Mammary epithelial cell (primary cell): ENCODE measurements at regions of chr18 and their contacts with region 1.

Region 1: DNA sequence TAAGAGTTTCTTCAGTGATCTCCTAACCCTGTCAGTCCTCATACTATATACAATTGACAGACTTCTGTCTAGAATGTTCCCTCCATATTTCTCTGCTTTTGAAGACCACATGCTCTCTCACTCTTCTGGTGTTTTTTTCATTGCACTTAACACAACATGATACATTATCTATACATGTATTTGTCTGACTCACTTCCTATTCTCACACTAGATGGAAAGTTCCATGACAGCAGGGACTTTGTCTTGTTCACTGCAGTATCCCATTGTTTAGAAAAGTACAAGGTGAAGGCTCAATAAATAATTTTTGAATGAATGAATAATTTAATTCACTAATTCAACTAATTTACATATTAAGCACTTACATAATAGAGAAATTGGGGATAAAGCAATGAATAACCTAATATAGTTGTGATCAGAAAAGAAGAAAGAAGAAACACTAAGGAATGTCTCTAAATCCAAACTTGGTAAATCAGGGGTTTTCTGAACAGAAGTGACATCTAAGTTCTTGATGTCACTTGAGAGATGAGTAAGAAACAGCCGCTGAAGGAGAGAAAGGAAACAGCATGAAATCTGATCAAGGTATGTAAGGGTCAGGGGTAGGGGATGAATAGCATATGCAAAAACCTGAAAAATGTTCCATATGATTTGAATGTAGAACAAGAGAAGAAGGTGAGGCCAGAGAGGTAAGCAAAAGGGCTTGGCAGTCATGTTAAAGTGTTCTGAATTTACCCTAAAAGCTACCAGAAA is 42.4 kb downstream of the MBD2 start:
- DNase-seq: peak; percentile 46
- H3K4me3 ChIP-seq: no peak overlapping the region
- H3K27ac ChIP-seq: no peak overlapping the region
- H3K4me1 ChIP-seq: no peaks in the 10 kb centered on the region
- H3K27me3 ChIP-seq: no peaks in the 10 kb centered on the region
- CTCF ChIP-seq: no peak

Region 2: DNA sequence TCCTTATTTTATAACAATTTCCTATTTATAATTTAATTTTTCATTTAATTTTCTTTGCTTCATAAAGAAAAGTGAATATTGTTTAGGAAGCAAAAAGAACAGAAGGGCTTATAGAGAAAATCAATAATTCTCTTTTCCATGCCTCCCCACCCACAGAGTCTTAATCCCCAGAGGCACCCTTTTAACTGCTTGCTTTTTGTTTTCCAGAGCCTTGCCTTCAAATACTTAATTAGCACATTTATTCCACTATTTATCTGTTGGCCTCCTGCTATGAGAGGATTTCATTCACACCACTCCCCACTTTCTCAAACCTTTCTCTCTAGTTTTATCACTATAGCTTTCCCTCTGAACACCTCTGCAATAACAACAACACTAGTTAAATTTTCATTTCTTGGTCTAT is 331.1 kb before region 1 on chr18:
- CTCF ChIA-PET with region 1: no interaction called
- dilution Hi-C with region 1: no loop called
- in situ Hi-C with region 1: no loop called
- intact Hi-C with region 1: no loop called
- DNase-seq: no peak
- H3K4me3 ChIP-seq: no peak overlapping the region
- H3K27ac ChIP-seq: no peak overlapping the region
- H3K4me1 ChIP-seq: no peaks in the 10 kb centered on the region
- H3K27me3 ChIP-seq: no peaks in the 10 kb centered on the region
- CTCF ChIP-seq: no peak

Region 3: DNA sequence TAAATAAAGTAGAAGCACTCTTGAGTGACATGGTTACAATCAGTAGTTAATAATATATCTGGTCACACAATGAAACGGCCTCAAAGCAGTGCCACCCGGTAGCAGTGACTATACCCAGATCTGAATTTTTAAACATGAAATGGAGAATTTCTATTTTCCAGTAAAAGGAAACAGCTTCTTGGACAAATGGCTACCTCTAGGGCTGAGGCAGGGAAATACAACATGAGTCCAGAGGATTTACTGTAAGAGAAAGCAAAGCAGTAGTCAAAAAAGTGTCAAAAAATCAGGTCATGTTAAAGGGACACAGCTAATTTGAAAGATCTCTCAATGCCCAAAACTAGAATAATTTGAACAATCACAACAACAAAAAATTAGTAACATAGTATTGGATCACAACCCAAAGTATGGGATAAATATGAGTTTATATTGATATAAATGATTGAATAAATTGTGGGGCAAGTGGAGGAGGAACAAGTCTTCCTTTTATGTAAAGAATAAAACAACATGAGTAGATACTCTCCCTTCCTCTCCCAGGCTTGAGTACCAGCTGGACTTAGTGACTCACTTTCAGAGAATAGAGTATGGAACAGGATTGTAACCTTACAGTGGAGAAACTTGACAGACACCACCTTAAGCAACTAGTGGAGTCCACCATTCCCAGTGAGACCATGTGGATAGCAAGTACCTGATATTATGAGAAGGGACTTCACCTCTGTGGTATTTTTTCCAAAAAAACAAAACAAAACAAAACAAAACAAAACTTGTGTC is 138.4 kb before region 1 on chr18:
- CTCF ChIA-PET with region 1: no interaction called
- dilution Hi-C with region 1: no loop called
- in situ Hi-C with region 1: no loop called
- intact Hi-C with region 1: no loop called
- DNase-seq: peak; percentile 67
- H3K4me3 ChIP-seq: no peak overlapping the region
- H3K27ac ChIP-seq: no peak overlapping the region
- H3K4me1 ChIP-seq: peaks cover 4% of the 10 kb centered on the region
- H3K27me3 ChIP-seq: no peaks in the 10 kb centered on the region
- CTCF ChIP-seq: peak; percentile 4 to 39

Region 4: GRCh38 chr18:54209471-54210180 is 27.6 kb after region 1 on chr18:
- CTCF ChIA-PET with region 1: interaction called, 11 read pairs
- dilution Hi-C with region 1: no loop called
- in situ Hi-C with region 1: no loop called
- intact Hi-C with region 1: no loop called
- DNase-seq: peak; percentile 72
- H3K4me3 ChIP-seq: no peak overlapping the region
- H3K27ac ChIP-seq: peak overlapping the region; percentile 30
- H3K4me1 ChIP-seq: peaks cover 9% of the 10 kb centered on the region
- H3K27me3 ChIP-seq: no peaks in the 10 kb centered on the region
- CTCF ChIP-seq: no peak